ENCODE measurements at regions of chr16 and their contacts with region 1.

Region 1: GRCh38 chr16:75519881-75520280 is 16.0 kb downstream of the CHST5 start:
- DNase-seq: no peak
- H3K4me3 ChIP-seq: no peak overlapping the region
- H3K4me3 Mint-ChIP-seq: no peak overlapping the region
- H3K27ac Mint-ChIP-seq: no peak overlapping the region
- H3K4me1 ChIP-seq: no peaks in the 10 kb centered on the region
- H3K4me1 Mint-ChIP-seq: peaks cover 7% of the 10 kb centered on the region
- H3K27me3 ChIP-seq: no peaks in the 10 kb centered on the region
- H3K27me3 Mint-ChIP-seq: no peaks in the 10 kb centered on the region
- CTCF ChIP-seq: no peak

Region 2: DNA sequence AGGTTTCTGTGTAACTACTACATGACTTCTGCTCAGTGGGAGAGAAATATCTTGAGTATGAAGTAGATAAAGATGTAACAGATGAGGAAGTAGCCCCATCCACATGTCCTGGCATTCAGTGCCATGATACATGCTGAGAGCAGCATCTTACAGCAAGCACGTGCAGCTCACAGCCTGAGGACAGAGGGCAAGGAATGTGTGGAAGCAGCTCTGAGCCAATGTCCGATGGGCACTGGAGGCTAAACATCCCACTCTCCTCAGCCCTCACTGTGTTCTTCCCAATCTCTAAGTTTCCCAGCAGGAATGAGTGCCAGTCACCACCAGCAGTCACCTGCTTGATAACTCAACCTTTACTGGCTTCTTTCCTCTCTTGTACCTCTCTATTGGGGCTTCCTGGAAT is 127.0 kb before region 1 on chr16:
- CTCF ChIA-PET with region 1: no interaction called
- POLR2A ChIA-PET with region 1: no interaction called
- intact Hi-C with region 1: no loop called
- DNase-seq: no peak
- H3K4me3 ChIP-seq: no peak overlapping the region
- H3K4me3 Mint-ChIP-seq: no peak overlapping the region
- H3K27ac Mint-ChIP-seq: no peak overlapping the region
- H3K4me1 ChIP-seq: 0 out of 2 replicates have a peak, but pooled peaks cover 4% of the 10 kb centered on the region
- H3K4me1 Mint-ChIP-seq: no peaks in the 10 kb centered on the region
- H3K27me3 ChIP-seq: no peaks in the 10 kb centered on the region
- H3K27me3 Mint-ChIP-seq: no peaks in the 10 kb centered on the region
- CTCF ChIP-seq: no peak

Region 3: GRCh38 chr16:75402821-75403475 is 116.9 kb before region 1 on chr16:
- CTCF ChIA-PET with region 1: no interaction called
- POLR2A ChIA-PET with region 1: no interaction called
- intact Hi-C with region 1: no loop called
- DNase-seq: peak in 1 of 2 experiments; percentile 41
- H3K4me3 ChIP-seq: no peak overlapping the region
- H3K4me3 Mint-ChIP-seq: no peak overlapping the region
- H3K27ac Mint-ChIP-seq: no peak overlapping the region
- H3K4me1 ChIP-seq: no peaks in the 10 kb centered on the region
- H3K4me1 Mint-ChIP-seq: no peaks in the 10 kb centered on the region
- H3K27me3 ChIP-seq: no peaks in the 10 kb centered on the region
- H3K27me3 Mint-ChIP-seq: no peaks in the 10 kb centered on the region
- CTCF ChIP-seq: peak; percentile 80 to 85

Region 4: GRCh38 chr16:75464130-75464918 is 55.6 kb before region 1 on chr16 and contains the start of gene TMEM170A:
- CTCF ChIA-PET with region 1: interaction called, 11 read pairs
- POLR2A ChIA-PET with region 1: interaction called, 10 read pairs
- intact Hi-C with region 1: loop called (anchors 1 kb)
- DNase-seq: peak; percentile 99 to 100
- H3K4me3 ChIP-seq: peak within 1 kb of the TSS; percentile 100
- H3K4me3 Mint-ChIP-seq: peak within 1 kb of the TSS; percentile 84
- H3K27ac Mint-ChIP-seq: peak within 1 kb of the TSS; percentile 79
- H3K4me1 ChIP-seq: peaks cover 5% of the 10 kb centered on the region
- H3K4me1 Mint-ChIP-seq: peaks cover 12% of the 10 kb centered on the region
- H3K27me3 ChIP-seq: no peaks in the 10 kb centered on the region
- H3K27me3 Mint-ChIP-seq: no peaks in the 10 kb centered on the region
- CTCF ChIP-seq: peak; percentile 100
- total RNA-seq, gene TMEM170A: 57.4 and 63.6 TPM in 2 replicates

Region 5: DNA sequence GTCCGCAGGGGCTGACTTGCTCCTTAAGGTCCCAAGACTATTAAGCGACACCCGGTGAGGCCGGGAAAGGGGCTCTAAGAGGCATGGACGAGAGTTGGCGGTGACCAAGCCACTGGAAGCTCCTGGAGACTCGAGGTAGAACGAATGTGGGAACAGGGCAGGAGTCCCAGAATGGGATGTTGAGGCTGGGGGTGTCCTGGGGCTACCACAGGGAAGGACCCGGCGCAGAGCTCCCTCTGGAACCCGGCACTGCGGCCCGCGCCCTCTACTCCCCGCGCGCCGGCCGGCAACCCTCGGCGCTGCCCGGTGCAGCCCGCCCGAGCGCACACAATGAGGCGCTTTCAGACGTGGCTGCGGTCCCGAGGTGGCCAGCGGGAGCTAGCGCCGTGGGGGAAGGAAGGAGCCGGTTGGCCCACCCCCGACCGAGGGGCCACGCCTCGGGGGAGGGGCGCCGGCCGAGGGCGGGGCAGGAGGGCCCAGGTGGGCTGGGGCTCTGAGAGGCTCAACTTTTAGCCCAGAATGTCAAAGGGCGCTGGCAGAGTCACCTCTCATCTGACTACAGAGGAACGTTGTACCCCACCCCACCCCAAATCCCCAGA is 24.7 kb before region 1 on chr16 and contains the start of gene CHST6:
- CTCF ChIA-PET with region 1: interaction called, 17 read pairs
- POLR2A ChIA-PET with region 1: interaction called, 14 read pairs
- intact Hi-C with region 1: no loop called
- DNase-seq: peak; percentile 69 to 71
- H3K4me3 ChIP-seq: peak within 1 kb of the TSS; percentile 49
- H3K4me3 Mint-ChIP-seq: peak within 1 kb of the TSS; percentile 94
- H3K27ac Mint-ChIP-seq: peak within 1 kb of the TSS; percentile 65
- H3K4me1 ChIP-seq: no peaks in the 10 kb centered on the region
- H3K4me1 Mint-ChIP-seq: peaks cover 6% of the 10 kb centered on the region
- H3K27me3 ChIP-seq: no peaks in the 10 kb centered on the region
- H3K27me3 Mint-ChIP-seq: no peaks in the 10 kb centered on the region
- CTCF ChIP-seq: no peak
- total RNA-seq, gene CHST6: 1.1 and 1.3 TPM in 2 replicates

Region 6: DNA sequence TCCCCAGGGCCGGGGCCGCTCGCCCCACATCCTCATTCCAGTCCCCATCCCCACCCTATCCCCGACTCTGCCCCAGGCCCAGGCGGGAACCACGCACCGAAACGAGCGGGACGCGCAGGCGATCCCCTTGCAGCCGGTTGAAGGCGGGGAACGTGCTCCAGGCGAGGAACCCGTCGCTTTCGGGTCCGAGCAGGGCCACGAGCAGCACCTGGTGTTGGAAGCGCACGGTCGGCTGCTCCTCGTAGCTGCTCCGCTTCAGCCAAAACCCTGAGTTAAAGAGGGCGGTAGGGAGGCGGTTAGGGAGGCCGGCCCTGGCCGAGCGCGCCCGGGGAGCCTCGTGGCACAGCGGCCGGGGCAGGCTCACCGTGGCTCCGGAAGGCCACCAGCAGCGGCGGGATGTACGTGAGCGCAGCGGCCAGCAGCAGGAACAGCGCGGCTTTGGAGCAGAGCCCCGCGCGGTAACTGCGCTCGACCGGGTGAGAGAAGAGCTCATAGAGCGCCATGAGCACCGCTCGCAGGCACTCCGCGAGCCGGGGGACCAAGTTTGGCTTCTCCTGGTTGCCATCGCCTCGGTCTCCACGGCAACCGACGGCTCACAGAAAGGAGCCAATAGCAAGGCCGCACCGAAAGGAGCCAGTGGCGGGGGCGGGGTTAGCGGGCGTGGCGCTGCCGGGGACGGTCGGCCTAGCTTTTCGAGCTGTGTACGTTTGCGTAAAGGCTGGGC is 36.0 kb after region 1 on chr16 and contains the start of gene TMEM231:
- CTCF ChIA-PET with region 1: interaction called, 21 read pairs
- POLR2A ChIA-PET with region 1: no interaction called
- intact Hi-C with region 1: loop called (anchors 1 kb)
- DNase-seq: peak; percentile 95 to 96
- H3K4me3 ChIP-seq: peak within 1 kb of the TSS; percentile 76
- H3K4me3 Mint-ChIP-seq: peak within 1 kb of the TSS; percentile 98
- H3K27ac Mint-ChIP-seq: peak within 1 kb of the TSS; percentile 98
- H3K4me1 ChIP-seq: no peaks in the 10 kb centered on the region
- H3K4me1 Mint-ChIP-seq: peaks cover 6% of the 10 kb centered on the region
- H3K27me3 ChIP-seq: no peaks in the 10 kb centered on the region
- H3K27me3 Mint-ChIP-seq: no peaks in the 10 kb centered on the region
- CTCF ChIP-seq: no peak
- total RNA-seq, gene TMEM231: 5.2 and 6.6 TPM in 2 replicates

Region 7: DNA sequence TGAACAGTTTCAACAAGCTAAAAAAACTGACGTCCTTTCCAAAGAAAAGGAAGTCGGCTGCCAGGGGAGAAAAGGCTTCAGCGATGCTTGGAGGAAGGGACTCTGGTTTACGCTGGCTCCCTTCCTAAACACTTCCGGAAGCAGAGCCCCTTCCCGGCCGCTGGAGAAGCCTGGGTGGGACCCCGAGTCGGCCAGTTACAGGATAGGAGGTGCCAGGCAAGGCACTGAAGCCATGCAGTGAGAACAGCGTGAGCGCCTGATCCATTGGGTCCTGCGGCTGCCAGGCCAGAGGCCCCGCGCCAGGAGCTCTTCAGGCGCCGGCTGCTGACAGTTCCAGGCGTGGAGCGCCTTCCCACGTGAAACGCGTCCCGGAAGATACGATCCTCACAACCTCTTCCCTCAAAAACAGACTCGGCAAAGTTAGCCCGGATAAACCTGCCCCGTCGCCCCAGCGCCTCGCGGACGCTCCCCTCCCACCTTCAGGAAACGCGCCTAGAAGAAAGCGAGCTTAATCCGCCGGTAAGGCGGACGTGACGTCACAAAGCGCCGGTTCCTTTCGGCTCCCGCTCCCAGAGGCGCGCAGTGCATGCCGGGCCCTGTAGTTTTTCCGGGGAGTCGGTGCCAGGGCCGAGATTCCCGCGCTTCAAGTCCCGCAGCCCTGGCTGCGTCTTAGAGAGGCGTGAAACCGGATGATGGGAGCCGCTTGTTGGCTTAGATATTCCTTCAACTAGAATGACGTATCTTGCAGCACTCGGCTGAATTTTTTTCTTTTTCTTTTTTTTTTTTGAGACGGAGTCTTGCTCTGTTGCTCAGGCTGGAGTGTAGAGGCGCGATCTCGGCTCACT is 103.1 kb after region 1 on chr16 and contains the start of gene ADAT1:
- CTCF ChIA-PET with region 1: interaction called, 12 read pairs
- POLR2A ChIA-PET with region 1: interaction called, 13 read pairs
- intact Hi-C with region 1: loop called (anchors 1 kb)
- DNase-seq: peak; percentile 98
- H3K4me3 ChIP-seq: peak within 1 kb of the TSS; percentile 68
- H3K4me3 Mint-ChIP-seq: peak within 1 kb of the TSS; percentile 94
- H3K27ac Mint-ChIP-seq: peak within 1 kb of the TSS; percentile 98
- H3K4me1 ChIP-seq: peaks cover 35% of the 10 kb centered on the region
- H3K4me1 Mint-ChIP-seq: peaks cover 33% of the 10 kb centered on the region
- H3K27me3 ChIP-seq: no peaks in the 10 kb centered on the region
- H3K27me3 Mint-ChIP-seq: no peaks in the 10 kb centered on the region
- CTCF ChIP-seq: no peak
- total RNA-seq, gene ADAT1: 70.1 and 71.3 TPM in 2 replicates

Region 8: GRCh38 chr16:75764154-75764768 is 244.4 kb after region 1 on chr16:
- CTCF ChIA-PET with region 1: interaction called, 5 read pairs
- POLR2A ChIA-PET with region 1: no interaction called
- intact Hi-C with region 1: loop called (anchors 1 kb)
- DNase-seq: peak; percentile 67 to 73
- H3K4me3 ChIP-seq: no peak overlapping the region
- H3K4me3 Mint-ChIP-seq: no peak overlapping the region
- H3K27ac Mint-ChIP-seq: no peak overlapping the region
- H3K4me1 ChIP-seq: no peaks in the 10 kb centered on the region
- H3K4me1 Mint-ChIP-seq: no peaks in the 10 kb centered on the region
- H3K27me3 ChIP-seq: no peaks in the 10 kb centered on the region
- H3K27me3 Mint-ChIP-seq: peaks cover 10% of the 10 kb centered on the region
- CTCF ChIP-seq: peak; percentile 85 to 90

Measured in Caco-2 (cell line).